ENCODE measurements at regions of chr21 and their contacts with region 1.

Region 1: DNA sequence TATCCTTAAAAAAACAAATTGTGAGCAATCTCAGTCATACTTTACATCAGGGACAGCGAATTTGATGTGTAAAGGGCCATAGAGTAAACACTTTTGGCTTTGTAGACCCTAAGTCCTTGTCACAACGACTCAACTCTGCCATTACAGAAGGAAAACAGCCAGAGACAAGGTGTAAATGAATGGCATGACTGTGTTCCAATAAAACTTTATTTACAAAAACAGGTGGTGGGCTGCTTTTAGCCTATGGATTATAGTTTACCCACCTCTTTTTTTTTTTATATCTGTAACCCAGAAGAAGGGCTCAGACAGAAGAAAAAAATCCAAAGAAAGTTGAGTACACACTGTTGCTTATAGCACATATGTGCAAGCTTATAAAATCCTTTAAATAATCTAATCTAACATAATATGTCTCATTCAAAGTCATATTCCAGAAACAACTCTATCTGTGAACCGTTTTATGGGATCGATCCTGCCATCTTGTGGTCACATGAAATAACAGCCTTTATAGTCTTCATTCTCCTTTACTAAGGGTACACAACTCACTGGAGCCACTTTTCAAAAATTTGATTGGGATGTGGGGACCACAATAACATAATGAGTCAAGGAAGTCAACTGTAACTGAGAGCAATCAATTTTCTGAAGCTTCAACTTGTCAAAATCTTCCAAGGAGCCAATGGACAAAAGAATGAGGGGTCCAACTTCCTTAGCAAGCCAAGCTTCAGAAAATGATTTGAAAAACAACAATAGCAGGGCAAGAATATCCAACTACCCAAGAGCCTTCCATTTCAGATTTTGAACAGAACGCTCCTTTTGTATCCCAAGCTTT is 142.2 kb upstream of the KRTAP19-8 start:
- DNase-seq: no peak
- ATAC-seq: peak in 2 of 8 donors; percentile 52 to 55
- H3K4me3 ChIP-seq: no peak overlapping the region
- H3K27ac ChIP-seq: no peak overlapping the region
- H3K4me1 ChIP-seq: peaks cover 0 to 14% (median 0%) of the 10 kb centered on the region in 9 donors
- H3K27me3 ChIP-seq: peaks cover 0 to 4% (median 0%) of the 10 kb centered on the region in 7 donors
- CTCF ChIP-seq: peak; percentile 28 to 77 (median 64)

Region 2: DNA sequence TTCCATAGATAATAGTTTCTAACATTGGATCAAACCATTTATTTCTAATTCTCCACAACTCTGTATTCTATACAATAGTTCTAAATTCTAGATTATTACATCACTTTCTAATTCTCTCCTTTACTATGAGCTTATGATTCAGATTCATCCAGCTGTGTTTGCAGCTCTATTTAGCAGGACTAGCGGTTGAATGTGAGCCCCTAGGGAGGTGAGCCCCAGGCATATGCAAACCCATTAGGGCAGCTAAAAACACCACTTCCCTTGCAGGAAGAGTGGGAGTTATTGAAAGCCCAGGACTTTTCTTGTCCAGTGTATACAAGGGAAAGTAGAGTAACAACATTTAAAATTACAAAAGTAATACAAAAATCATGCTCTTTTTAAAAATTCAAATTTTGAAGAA is 199.1 kb before region 1 on chr21:
- intact Hi-C with region 1: no loop called
- DNase-seq: peak in 1 of 2 donors; percentile 16
- ATAC-seq: peak in 3 of 8 donors; percentile 67 to 86 (median 85)
- H3K4me3 ChIP-seq: no peak overlapping the region
- H3K27ac ChIP-seq: peak overlapping the region in 4 of 10 donors; percentile 15 to 61 (median 32)
- H3K4me1 ChIP-seq: peaks cover 0 to 26% (median 9%) of the 10 kb centered on the region in 9 donors
- H3K27me3 ChIP-seq: no peaks in the 10 kb centered on the region
- CTCF ChIP-seq: no peak

Region 3: GRCh38 chr21:31098576-31099005 is 81.9 kb before region 1 on chr21:
- intact Hi-C with region 1: loop called (anchors 1 to 5 kb)
- DNase-seq: peak; percentile 58 to 66
- ATAC-seq: peak in 7 of 8 donors; percentile 11 to 82 (median 69)
- H3K4me3 ChIP-seq: no peak overlapping the region
- H3K27ac ChIP-seq: no peak overlapping the region
- H3K4me1 ChIP-seq: peaks cover 0 to 7% (median 0%) of the 10 kb centered on the region in 9 donors
- H3K27me3 ChIP-seq: peaks cover 0 to 13% (median 9%) of the 10 kb centered on the region in 7 donors
- CTCF ChIP-seq: peak; percentile 79 to 89 (median 85)

Region 4: GRCh38 chr21:31132574-31133242 is 47.8 kb before region 1 on chr21:
- intact Hi-C with region 1: no loop called
- DNase-seq: no peak
- ATAC-seq: peak in 1 of 8 donors; percentile 16
- H3K4me3 ChIP-seq: no peak overlapping the region
- H3K27ac ChIP-seq: no peak overlapping the region
- H3K4me1 ChIP-seq: peaks cover 0 to 13% (median 0%) of the 10 kb centered on the region in 9 donors
- H3K27me3 ChIP-seq: peaks cover 0 to 6% (median 0%) of the 10 kb centered on the region in 7 donors
- CTCF ChIP-seq: no peak